Activated naive CD4-positive, alpha-beta T cell treated with anti-CD3 and anti-CD28 coated beads for 36 hours (primary cell): ENCODE measurements at regions of chr1 and their contacts with region 1.

Region 1: DNA sequence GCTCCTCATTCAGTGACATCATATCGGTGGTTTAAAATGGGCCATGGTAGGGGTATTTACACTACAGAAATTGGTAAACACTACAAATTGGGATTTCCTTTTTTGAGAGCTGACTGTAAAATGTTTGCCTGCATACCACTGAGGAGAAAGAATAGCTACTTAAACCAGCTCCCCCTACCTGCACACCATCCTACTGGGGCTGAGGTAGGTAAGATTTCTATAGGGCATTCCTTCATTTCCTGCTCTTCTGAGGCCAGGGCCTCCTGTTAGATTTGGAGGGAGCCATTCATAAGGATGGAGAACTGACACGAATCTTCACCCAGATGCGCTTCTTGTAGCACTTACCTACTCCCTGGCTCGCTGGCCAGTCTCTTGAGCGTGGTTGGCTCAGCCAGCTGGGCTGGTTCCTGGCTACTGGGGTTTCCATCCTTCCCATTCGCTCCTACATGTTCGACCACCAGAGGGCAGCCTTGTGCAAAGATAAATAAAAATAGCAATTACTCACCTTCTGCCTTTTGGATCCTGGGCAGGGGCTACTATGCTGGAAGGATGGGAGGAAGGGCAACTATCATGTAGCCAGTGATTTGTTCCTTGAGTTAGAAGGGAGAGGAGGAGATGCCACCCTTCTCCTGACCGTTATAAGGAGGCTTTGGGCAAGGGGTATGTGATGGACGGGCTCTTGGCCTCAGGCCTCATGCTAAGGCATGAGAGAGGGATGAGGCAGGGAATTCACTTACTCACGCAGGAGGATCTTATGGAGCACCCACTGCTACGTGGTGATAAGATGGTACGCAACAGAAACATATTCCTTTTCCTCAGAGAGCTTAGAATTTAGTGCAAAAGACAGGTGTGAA is 10.7 kb downstream of the OPTC start:
- DNase-seq: peak; percentile 91
- H3K4me3 Mint-ChIP-seq: no peak overlapping the region
- H3K27ac Mint-ChIP-seq: no peak overlapping the region
- H3K4me1 Mint-ChIP-seq: peaks cover 6% of the 10 kb centered on the region
- H3K27me3 Mint-ChIP-seq: no peaks in the 10 kb centered on the region

Region 2: DNA sequence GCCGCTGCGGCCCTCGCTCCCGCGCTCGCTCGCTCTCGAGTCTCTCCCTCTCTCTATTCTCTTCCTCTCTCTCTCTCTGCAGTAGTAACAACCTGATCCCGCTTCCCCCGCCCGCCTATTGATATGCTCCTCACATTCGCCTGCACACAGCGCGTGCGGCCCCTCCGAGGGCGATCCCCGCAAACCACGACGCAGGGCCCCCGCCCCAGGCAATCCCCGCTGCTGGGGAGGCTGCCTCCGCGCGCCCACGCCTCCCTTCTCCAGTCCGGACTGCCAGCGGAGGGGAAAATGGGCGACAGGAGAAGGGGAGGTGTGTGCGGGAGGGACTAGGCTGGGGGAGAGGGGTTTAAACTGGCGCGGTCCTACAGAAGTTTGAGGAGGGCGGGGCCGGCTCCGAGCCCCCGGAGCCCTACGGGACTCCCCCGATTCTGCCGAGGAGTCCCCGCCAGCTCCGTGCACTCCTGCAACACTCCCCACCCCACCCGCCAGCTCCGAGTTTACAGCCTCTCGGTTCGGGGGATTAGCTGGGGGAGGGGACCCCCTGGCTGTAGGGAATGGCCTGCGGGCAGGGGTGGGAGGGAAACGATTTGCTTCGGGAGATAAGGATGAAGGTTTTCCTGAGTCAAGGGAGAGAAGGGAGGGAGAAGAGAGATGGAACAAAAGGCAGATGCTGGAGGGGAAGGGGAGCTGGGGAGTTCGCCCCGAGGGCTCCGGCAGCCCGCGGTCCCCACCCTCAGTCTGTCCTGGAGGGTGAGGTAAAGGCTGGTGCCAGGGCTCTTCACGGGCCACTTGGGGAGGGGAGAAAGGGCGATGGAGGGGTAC is 861.0 kb before region 1 on chr1:
- CTCF ChIA-PET with region 1: no interaction called
- intact Hi-C with region 1: no loop called
- DNase-seq: peak; percentile 40
- H3K4me3 Mint-ChIP-seq: peak overlapping the region; percentile 48
- H3K27ac Mint-ChIP-seq: no peak overlapping the region
- H3K4me1 Mint-ChIP-seq: peaks cover 21% of the 10 kb centered on the region
- H3K27me3 Mint-ChIP-seq: peaks cover 62% of the 10 kb centered on the region

Region 3: DNA sequence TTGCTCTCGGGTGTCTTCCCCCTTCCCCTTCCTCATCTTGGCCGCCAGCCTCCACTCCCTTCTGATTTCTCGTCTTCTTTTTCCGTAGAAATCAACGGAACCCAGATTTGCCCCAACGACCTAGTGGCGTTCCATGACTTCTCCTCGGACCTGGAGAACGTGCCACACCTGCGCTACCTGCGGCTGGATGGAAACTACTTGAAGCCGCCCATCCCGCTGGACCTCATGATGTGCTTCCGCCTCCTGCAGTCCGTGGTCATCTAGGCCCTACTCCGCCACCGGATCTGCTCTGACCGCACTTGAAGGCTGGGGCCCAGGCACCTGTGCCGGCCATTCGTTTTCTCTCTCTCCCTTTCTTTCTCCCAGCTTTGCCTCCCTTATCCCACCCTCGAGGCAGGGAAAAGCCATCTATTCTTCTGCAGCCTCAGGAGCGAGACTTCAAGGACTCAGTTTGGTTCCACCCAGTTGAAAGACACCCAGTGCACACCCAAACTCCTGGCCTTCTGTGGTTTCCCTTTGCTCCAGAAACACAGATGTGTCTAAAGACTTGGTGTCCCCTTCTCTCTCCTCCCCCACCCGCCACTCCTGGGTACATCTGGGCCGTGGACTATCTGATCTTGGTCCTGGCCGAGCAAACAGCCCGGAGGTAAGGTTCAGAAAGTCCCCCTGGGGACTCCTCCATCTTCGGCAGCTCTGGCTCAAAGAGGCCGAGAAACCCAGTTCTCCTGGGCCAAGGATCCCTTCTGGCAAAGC is 17.8 kb before region 1 on chr1:
- CTCF ChIA-PET with region 1: interaction called, 12 read pairs
- intact Hi-C with region 1: no loop called
- DNase-seq: no peak
- H3K4me3 Mint-ChIP-seq: peak overlapping the region; percentile 67
- H3K27ac Mint-ChIP-seq: no peak overlapping the region
- H3K4me1 Mint-ChIP-seq: peaks cover 6% of the 10 kb centered on the region
- H3K27me3 Mint-ChIP-seq: no peaks in the 10 kb centered on the region

Region 4: DNA sequence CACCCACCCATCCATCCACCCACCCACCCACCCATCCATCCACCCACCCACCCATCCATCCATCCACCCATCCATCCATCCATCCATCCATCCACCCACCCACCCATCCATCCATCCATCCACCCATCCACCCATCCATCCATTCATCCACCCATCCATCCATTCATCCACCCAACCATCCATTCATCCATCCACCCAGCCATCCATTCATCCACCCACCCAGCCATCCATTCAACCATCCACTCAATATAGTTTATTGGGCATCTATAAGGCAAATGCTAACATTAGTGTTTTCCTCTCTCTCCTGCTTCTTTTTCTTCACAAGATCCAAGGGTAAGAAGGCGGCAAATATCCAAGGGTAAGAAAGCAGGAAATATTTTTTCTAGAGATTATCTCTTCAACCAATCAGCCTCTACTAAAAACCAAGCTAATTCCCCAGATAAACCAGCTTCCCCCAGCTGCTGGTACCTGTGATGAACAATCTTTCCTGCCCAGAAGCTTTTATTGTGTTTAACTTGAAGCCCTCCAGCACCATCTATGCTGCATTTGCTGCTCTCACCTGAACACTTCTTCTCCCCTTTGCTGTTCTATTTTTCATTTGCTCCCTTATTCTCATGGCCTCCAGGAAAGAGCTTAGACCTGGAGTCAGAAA is 99.4 kb after region 1 on chr1:
- CTCF ChIA-PET with region 1: interaction called, 17 read pairs
- intact Hi-C with region 1: no loop called
- DNase-seq: no peak
- H3K4me3 Mint-ChIP-seq: no peak overlapping the region
- H3K27ac Mint-ChIP-seq: no peak overlapping the region
- H3K4me1 Mint-ChIP-seq: peaks cover 32% of the 10 kb centered on the region
- H3K27me3 Mint-ChIP-seq: no peaks in the 10 kb centered on the region

Region 5: GRCh38 chr1:203663821-203664220 is 159.2 kb after region 1 on chr1:
- CTCF ChIA-PET with region 1: no interaction called
- intact Hi-C with region 1: no loop called
- DNase-seq: no peak
- H3K4me3 Mint-ChIP-seq: no peak overlapping the region
- H3K27ac Mint-ChIP-seq: peak overlapping the region; percentile 13
- H3K4me1 Mint-ChIP-seq: peaks cover 28% of the 10 kb centered on the region
- H3K27me3 Mint-ChIP-seq: no peaks in the 10 kb centered on the region

Region 6: DNA sequence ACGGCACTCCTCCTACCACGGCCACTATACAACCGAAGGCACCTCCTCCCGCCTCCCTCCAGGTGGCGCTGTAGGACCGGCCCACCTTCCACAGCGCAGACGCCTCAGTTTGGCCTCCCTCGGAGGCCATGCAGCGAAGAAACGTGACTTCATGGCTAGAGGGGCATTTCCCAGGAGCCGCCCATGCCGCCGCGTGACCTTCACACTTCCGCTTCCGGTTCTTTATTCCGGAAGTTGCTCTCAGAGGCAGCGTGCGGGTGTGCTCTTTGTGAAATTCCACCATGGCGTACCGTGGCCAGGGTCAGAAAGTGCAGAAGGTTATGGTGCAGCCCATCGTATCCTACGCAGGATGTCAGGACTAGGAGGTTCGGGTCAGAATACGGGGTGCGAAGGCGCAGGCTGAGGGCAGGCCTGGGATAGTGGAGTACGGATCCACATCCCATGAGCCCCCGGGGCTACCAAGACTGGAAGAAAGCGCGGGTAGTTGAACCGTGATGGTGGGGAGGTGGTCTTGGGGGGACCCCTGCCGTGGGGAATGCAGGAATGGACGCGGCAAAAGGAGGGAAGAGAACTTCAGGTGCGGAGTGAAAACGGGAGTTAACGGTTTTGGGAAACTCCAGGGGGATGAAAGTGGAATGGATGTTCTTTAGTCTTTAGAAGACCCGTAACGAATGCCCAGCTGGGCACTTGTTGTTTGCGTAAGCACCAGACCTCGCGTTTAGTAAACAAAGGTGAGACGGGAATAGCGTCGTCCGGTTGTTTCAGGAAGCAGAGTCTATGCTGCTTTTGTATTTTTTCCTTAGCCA is 357.0 kb after region 1 on chr1 and contains the start of gene SNRPE:
- CTCF ChIA-PET with region 1: no interaction called
- intact Hi-C with region 1: loop called (anchors 10 kb)
- DNase-seq: peak; percentile 98
- H3K4me3 Mint-ChIP-seq: peak within 1 kb of the TSS; percentile 100
- H3K27ac Mint-ChIP-seq: peak within 1 kb of the TSS; percentile 95
- H3K4me1 Mint-ChIP-seq: peaks cover 25% of the 10 kb centered on the region
- H3K27me3 Mint-ChIP-seq: no peaks in the 10 kb centered on the region
- total RNA-seq, gene SNRPE: 366 to 370 TPM